ENCODE measurements at regions of chr10 and their contacts with region 1.

Region 1: GRCh38 chr10:118220346-118220850 is 121.7 kb downstream of the FAM204A start:
- DNase-seq: no peak
- H3K4me3 ChIP-seq: no peak overlapping the region
- H3K27ac ChIP-seq: no peak overlapping the region
- H3K27me3 ChIP-seq: peaks cover 0 to 6% (median 0%) of the 10 kb centered on the region in 45 donors
- CTCF ChIP-seq: no peak

Region 2: DNA sequence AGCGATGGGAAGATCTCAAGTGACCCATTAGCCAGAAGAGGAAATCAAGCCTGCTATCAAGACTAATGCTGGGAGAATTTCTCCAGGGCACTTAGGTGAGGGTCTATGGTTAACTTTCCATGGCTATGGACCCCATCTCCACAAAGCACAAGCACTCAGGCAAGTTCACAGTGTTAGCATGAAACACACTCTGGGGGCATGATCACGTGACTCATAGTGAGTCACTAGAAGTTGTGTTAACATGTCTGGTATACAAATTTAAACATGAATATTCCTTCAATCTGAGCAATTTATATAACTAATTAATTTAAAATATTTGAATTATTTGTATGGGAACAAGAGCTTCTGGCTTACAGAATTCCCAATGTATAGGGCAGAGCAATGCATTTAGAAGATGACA is 10.1 kb before region 1 on chr10:
- intact Hi-C with region 1: loop called in 1 of 2 experiments (anchors 1 kb)
- DNase-seq: no peak
- H3K4me3 ChIP-seq: no peak overlapping the region
- H3K27ac ChIP-seq: no peak overlapping the region
- H3K27me3 ChIP-seq: no peaks in the 10 kb centered on the region
- CTCF ChIP-seq: no peak

Measured in dorsolateral prefrontal cortex (tissue), 120 donors.